ENCODE measurements at regions of chr6 and their contacts with region 1.

Region 1: GRCh38 chr6:31559958-31560696 is 12.0 kb upstream of the LTA start:
- DNase-seq: peak; percentile 94 to 97 (median 95)
- H3K4me3 ChIP-seq: peak overlapping the region in 2 of 3 experiments; percentile 4 to 66
- H3K4me3 Mint-ChIP-seq: peak overlapping the region; percentile 79 to 81
- H3K27ac ChIP-seq: peak overlapping the region; percentile 96 to 98
- H3K27ac Mint-ChIP-seq: peak overlapping the region; percentile 91 to 98 (median 94)
- H3K4me1 ChIP-seq: peaks cover 84 to 85% of the 10 kb centered on the region in 2 donors
- H3K4me1 Mint-ChIP-seq: peaks cover 84% of the 10 kb centered on the region
- H3K27me3 ChIP-seq: no peaks in the 10 kb centered on the region
- H3K27me3 Mint-ChIP-seq: peaks cover 0 to 4% (median 0%) of the 10 kb centered on the region in 3 donors
- CTCF ChIP-seq: no peak

Region 2: GRCh38 chr6:31586599-31587281 is 26.6 kb after region 1 on chr6:
- intact Hi-C with region 1: loop called in 1 of 2 experiments (anchors 2 kb)
- DNase-seq: peak; percentile 61 to 80 (median 73)
- H3K4me3 ChIP-seq: peak overlapping the region; percentile 61 to 98 (median 92)
- H3K4me3 Mint-ChIP-seq: peak overlapping the region; percentile 97 to 98
- H3K27ac ChIP-seq: peak overlapping the region; percentile 80 to 85
- H3K27ac Mint-ChIP-seq: peak overlapping the region; percentile 84 to 97 (median 95)
- H3K4me1 ChIP-seq: peaks cover 70 to 84% of the 10 kb centered on the region in 2 donors
- H3K4me1 Mint-ChIP-seq: peaks cover 84% of the 10 kb centered on the region
- H3K27me3 ChIP-seq: no peaks in the 10 kb centered on the region
- H3K27me3 Mint-ChIP-seq: peaks cover 0 to 4% (median 3%) of the 10 kb centered on the region in 3 donors
- CTCF ChIP-seq: no peak

Region 3: GRCh38 chr6:31597006-31597405 is 36.9 kb after region 1 on chr6:
- intact Hi-C with region 1: no loop called
- DNase-seq: peak; percentile 55 to 66 (median 55)
- H3K4me3 ChIP-seq: no peak overlapping the region
- H3K4me3 Mint-ChIP-seq: no peak overlapping the region
- H3K27ac ChIP-seq: no peak overlapping the region
- H3K27ac Mint-ChIP-seq: peak overlapping the region in 1 of 7 donors; percentile 87
- H3K4me1 ChIP-seq: peaks cover 13 to 32% of the 10 kb centered on the region in 2 donors
- H3K4me1 Mint-ChIP-seq: peaks cover 33% of the 10 kb centered on the region
- H3K27me3 ChIP-seq: no peaks in the 10 kb centered on the region
- H3K27me3 Mint-ChIP-seq: peaks cover 0 to 7% (median under 1%) of the 10 kb centered on the region in 3 donors
- CTCF ChIP-seq: peak; percentile 74